Mammary epithelial cell (primary cell): ENCODE measurements at regions of chr2 and their contacts with region 1.

Region 1: GRCh38 chr2:190599073-190599472 is 49.8 kb upstream of the NAB1 start:
- DNase-seq: no peak
- H3K4me3 ChIP-seq: no peak overlapping the region
- H3K27ac ChIP-seq: no peak overlapping the region
- H3K4me1 ChIP-seq: peaks cover 30% of the 10 kb centered on the region
- H3K27me3 ChIP-seq: no peaks in the 10 kb centered on the region
- CTCF ChIP-seq: no peak

Region 2: GRCh38 chr2:190583507-190584337 is 15.4 kb before region 1 on chr2:
- CTCF ChIA-PET with region 1: no interaction called
- dilution Hi-C with region 1: no loop called
- in situ Hi-C with region 1: no loop called
- intact Hi-C with region 1: loop called (anchors 2 kb)
- DNase-seq: no peak
- H3K4me3 ChIP-seq: no peak overlapping the region
- H3K27ac ChIP-seq: no peak overlapping the region
- H3K4me1 ChIP-seq: peaks cover 23% of the 10 kb centered on the region
- H3K27me3 ChIP-seq: no peaks in the 10 kb centered on the region
- CTCF ChIP-seq: no peak

Region 3: GRCh38 chr2:190636373-190636772 is 37.3 kb after region 1 on chr2:
- CTCF ChIA-PET with region 1: no interaction called
- dilution Hi-C with region 1: no loop called
- in situ Hi-C with region 1: no loop called
- intact Hi-C with region 1: loop called (anchors 5 kb)
- DNase-seq: peak; percentile 58
- H3K4me3 ChIP-seq: no peak overlapping the region
- H3K27ac ChIP-seq: no peak overlapping the region
- H3K4me1 ChIP-seq: peaks cover 27% of the 10 kb centered on the region
- H3K27me3 ChIP-seq: no peaks in the 10 kb centered on the region
- CTCF ChIP-seq: no peak

Region 4: DNA sequence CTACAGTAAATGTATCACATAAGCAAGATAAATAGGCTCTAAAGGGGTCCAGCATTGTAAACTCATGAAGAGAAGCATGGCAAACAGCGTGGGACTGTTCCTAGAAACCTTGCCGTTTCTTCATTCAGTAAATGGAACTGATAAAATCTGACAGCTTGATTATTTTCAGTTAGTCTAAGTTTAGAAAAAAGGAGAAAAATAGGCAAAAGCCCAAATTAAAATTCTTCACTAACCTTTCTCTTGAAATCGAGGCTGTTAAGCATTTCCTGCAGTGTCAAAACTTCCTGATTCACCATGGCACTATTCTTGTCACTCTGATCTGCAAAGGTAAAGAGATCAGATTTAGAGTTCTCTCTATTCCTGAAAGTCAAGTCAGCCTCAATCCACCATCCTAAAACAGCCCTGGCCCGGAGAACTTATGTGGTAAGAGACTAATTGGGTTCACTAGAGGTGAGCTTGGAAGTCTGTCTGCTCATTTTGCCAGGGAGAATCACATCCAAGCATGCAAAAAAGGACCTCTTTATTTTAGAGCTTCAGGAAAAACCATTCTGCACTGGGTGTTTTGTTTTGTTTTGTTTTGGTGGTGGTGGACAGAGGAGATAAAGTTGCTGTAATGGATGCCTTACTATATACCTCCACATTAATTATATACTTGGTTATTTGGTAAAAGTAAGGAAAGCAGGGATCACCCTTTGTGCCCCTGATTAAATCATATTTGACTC is 467.3 kb after region 1 on chr2:
- CTCF ChIA-PET with region 1: no interaction called
- dilution Hi-C with region 1: no loop called
- in situ Hi-C with region 1: no loop called
- intact Hi-C with region 1: no loop called
- DNase-seq: no peak
- H3K4me3 ChIP-seq: no peak overlapping the region
- H3K27ac ChIP-seq: no peak overlapping the region
- H3K4me1 ChIP-seq: no peaks in the 10 kb centered on the region
- H3K27me3 ChIP-seq: no peaks in the 10 kb centered on the region
- CTCF ChIP-seq: no peak